RWPE1 (cell line): ENCODE measurements at regions of chr9 and their contacts with region 1.

Region 1: DNA sequence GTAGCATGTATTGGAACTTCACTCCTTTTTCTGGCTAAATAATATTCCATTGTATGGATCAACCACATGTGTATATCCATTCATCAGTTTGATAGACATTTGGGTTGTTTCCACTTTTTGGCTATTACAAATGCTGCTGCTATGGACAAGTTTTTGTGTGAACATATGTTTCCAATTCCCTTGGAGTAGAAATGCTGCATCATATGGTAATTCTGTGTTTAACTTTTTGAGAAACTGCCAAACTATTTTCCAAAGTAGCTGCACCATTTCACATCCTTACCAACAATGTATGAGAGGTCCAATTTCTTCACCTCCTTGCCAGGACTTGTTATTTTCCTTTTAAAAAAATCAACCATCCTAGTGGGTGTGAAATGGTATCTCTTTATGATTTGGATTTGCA is 8.4 kb downstream of the FRRS1L start:
- DNase-seq: no peak
- H3K27ac ChIP-seq: no peak overlapping the region
- CTCF ChIP-seq: no peak

Region 2: GRCh38 chr9:109399258-109399767 is 240.7 kb after region 1 on chr9:
- CTCF ChIA-PET with region 1: interaction called, 12 read pairs
- POLR2A ChIA-PET with region 1: no interaction called
- DNase-seq: no peak
- H3K27ac ChIP-seq: no peak overlapping the region
- CTCF ChIP-seq: no peak